ENCODE measurements at regions of chr13 and their contacts with region 1.

Region 1: DNA sequence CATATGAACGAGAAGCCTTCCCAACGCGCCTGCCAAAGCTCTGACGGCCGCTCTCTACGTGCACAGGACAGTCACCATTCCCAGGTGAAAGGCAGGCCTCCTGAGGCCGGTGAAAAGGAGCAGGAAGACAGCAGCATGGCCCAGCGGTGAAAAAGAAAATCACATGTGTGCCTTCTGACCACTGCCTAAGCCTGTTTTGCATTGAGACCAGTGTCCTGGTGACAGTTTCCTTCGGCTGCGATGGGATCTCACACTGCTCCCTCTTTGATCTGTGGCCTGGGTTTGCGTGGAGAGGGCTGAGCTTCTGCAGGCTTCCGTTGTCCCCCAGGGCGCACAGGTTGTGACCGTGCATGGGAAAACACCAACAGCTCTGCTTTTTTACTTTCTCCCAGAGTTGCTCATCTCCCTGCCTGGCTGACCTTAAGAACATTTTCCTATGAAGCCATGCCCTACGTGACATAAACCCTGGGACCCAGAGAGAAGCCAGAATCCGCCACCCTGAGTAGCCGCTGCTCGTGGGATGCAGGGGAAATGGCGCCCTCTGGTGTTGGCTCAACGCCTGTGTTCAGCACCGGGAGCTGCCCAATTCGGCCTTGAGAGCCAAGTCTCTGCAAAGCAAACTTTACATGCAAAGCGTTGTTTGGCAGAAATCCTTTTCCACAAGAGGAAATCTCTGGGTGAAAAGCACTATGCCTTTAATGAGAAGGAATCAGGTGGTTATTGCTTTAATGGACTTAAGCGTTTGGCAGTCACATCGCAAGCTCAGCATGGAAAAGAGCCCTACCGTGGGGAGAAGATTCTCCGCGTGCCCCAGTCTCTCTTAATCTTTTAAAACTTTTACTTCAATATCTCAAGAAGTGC is 112.2 kb upstream of the GPR12 start:
- DNase-seq: peak; percentile 8
- ATAC-seq: peak; percentile 92
- H3K4me3 ChIP-seq: no peak overlapping the region
- H3K27ac ChIP-seq: no peak overlapping the region
- H3K4me1 ChIP-seq: no peaks in the 10 kb centered on the region
- H3K27me3 ChIP-seq: peaks cover 3% of the 10 kb centered on the region; the same call in 1 of the 2 replicates
- CTCF ChIP-seq: peak; percentile 85

Region 2: DNA sequence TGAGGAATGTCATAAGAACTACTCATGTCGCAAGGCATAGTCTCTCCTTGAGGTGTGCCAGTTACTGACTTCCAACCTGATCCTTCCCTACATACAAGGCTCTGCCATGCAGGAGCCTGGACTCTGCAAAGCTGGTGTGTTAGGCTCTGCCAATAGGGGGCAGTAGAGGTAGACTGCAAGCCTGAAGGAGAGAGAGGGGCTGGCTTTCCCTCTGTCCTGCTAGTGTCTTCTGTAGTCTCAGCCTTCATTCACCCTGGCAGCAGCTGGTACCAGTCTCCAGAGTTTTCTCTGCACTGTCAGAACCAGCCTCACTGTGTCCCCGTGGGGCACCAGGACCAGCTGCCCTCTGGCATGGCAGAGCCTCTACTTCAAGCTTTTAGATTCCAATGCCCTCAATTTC is 835.5 kb before region 1 on chr13:
- CTCF ChIA-PET with region 1: interaction called, 11 read pairs
- POLR2A ChIA-PET with region 1: no interaction called
- in situ Hi-C with region 1: no loop called
- intact Hi-C with region 1: no loop called
- DNase-seq: no peak
- ATAC-seq: peak; percentile 69
- H3K4me3 ChIP-seq: no peak overlapping the region
- H3K27ac ChIP-seq: no peak overlapping the region
- H3K4me1 ChIP-seq: no peaks in the 10 kb centered on the region
- H3K27me3 ChIP-seq: no peaks in the 10 kb centered on the region
- CTCF ChIP-seq: peak; percentile 69

Region 3: DNA sequence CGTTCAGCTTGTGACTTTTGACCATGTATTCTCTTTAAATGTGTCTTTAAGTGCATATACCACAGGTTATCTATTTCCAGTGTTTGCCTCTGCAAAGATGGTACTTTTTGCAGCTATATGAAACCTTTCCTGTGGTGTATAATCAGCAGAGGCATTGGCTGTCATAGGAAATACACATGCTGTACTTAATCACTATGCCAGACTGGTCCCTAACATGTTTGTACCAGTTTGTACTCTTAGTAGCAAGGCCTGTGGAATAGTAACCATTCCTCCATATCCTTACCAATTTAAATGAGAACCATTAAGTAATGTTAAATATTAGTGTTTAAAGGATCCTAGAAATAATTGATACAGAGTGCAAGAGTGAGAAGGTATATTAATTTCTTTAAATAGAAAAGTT is 549.0 kb before region 1 on chr13:
- CTCF ChIA-PET with region 1: no interaction called
- POLR2A ChIA-PET with region 1: no interaction called
- in situ Hi-C with region 1: no loop called
- intact Hi-C with region 1: no loop called
- DNase-seq: no peak
- ATAC-seq: no peak
- H3K4me3 ChIP-seq: no peak overlapping the region
- H3K27ac ChIP-seq: no peak overlapping the region
- H3K4me1 ChIP-seq: no peaks in the 10 kb centered on the region; the same call in 1 of the 2 replicates
- H3K27me3 ChIP-seq: no peaks in the 10 kb centered on the region
- CTCF ChIP-seq: no peak

Region 4: DNA sequence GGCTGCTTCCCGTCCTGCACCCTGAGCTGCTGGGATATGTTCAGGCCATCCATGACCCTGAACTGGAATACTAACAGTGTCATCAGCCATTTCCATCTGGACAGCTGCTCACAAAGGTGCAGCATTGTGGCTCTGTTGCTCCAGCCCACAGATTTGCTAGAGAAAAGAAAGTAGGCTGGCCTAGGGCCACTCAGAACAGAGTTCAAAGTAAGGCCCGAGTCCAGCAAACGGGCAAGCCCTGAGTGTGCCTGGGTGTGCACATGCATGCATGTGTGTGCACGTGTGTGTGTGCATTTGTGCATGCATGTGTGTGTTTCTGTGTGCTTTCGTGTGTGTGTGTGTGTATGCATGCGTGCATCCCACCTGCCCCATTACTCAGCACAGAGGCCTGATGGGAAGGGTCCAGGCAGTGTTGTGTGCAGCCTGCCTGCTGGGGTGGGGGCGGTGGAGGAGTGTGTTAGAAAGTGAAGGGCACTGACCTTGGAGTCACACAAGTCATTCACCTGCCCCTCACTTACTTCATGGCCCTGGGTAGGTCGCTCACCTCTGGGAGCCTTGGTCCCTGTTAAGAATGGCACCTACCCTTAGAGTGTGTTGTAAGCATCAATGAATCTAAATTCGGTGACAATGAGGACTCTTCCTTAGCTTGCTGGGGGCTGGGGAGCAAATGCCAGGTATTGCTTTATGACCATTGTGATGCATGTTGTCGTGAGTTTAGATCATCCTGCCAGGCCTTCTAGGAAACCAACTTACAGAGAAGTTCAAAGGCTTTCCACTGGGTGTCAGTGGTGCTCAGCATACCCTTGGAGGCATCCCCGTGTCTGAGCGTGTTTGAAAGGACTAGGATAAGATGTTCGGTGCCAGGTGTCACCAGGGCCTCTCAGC is 165.4 kb before region 1 on chr13:
- CTCF ChIA-PET with region 1: interaction called, 9 read pairs
- POLR2A ChIA-PET with region 1: no interaction called
- in situ Hi-C with region 1: no loop called
- intact Hi-C with region 1: loop called (anchors 2 kb)
- DNase-seq: no peak
- ATAC-seq: peak; percentile 94
- H3K4me3 ChIP-seq: no peak overlapping the region
- H3K27ac ChIP-seq: no peak overlapping the region
- H3K4me1 ChIP-seq: no peaks in the 10 kb centered on the region
- H3K27me3 ChIP-seq: no peaks in the 10 kb centered on the region
- CTCF ChIP-seq: peak; percentile 76

Region 5: DNA sequence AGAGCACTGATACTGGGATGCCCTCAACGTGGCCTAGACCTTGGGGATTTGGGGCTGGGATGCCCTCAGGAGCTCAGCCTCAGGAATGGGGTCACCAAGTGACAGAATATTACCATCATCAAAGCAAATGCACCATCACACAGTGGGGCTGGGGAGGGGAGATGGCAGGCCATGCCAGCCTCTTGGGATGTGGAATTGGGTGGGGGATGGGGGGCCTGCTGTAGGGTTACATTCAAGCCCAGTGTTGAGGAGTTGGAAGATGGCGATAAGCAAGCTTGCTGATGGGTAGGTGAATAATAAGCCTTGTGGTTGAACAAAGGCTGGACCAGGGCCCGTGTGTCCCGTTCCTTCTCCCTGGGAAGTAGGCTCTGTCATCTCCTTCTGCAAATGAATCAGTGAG is 43.0 kb before region 1 on chr13:
- CTCF ChIA-PET with region 1: interaction called, 11 read pairs
- POLR2A ChIA-PET with region 1: no interaction called
- in situ Hi-C with region 1: no loop called
- intact Hi-C with region 1: no loop called
- DNase-seq: no peak
- ATAC-seq: no peak
- H3K4me3 ChIP-seq: no peak overlapping the region
- H3K27ac ChIP-seq: no peak overlapping the region
- H3K4me1 ChIP-seq: no peaks in the 10 kb centered on the region
- H3K27me3 ChIP-seq: no peaks in the 10 kb centered on the region
- CTCF ChIP-seq: no peak